ENCODE measurements at regions of chr10 and their contacts with region 1.

Region 1: DNA sequence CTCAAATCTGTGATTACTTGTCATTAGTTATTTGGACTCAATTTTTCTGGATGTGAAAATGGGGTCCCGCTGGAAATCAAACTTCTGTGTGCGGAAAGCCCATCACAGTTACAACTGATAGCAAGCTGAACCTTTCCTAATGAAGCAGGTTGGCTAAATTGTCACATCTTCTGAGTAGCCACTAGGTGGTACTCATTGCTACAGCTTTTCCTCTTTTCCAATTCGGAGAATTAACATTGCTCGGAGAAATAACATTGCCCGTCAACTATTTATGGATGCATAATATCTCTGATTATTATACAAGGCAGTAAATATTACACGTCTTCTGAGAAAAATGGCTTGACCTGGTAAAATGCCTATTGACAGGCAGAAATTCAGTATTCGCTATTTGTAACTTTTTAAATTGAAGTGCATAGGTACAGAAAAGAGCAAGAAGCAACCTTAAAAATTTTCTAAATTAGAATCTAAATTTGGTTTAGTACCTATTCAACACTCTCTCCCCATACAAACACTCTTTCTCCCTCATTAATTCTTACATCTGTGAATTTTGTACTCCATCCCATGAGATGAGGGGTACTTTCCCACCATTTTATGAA is 17.3 kb upstream of the BLOC1S2 start:
- DNase-seq: peak in 1 of 2 experiments; percentile 37
- H3K4me3 ChIP-seq: no peak overlapping the region
- H3K27ac ChIP-seq: no peak overlapping the region
- H3K4me1 ChIP-seq: no peaks in the 10 kb centered on the region; the same call in 1 of the 2 replicates
- H3K27me3 ChIP-seq: no peaks in the 10 kb centered on the region
- CTCF ChIP-seq: peak; percentile 64

Region 2: GRCh38 chr10:100267237-100268104 is 36.4 kb before region 1 on chr10 and contains the start of gene CWF19L1:
- CTCF ChIA-PET with region 1: no interaction called
- POLR2A ChIA-PET with region 1: no interaction called
- intact Hi-C with region 1: no loop called
- DNase-seq: peak; percentile 71 to 73
- H3K4me3 ChIP-seq: peak within 1 kb of the TSS; percentile 69
- H3K27ac ChIP-seq: peak within 1 kb of the TSS; percentile 71
- H3K4me1 ChIP-seq: no peaks in the 10 kb centered on the region
- H3K27me3 ChIP-seq: no peaks in the 10 kb centered on the region
- CTCF ChIP-seq: no peak
- total RNA-seq, gene CWF19L1: 17.9 and 20.4 TPM in 2 replicates

Region 3: DNA sequence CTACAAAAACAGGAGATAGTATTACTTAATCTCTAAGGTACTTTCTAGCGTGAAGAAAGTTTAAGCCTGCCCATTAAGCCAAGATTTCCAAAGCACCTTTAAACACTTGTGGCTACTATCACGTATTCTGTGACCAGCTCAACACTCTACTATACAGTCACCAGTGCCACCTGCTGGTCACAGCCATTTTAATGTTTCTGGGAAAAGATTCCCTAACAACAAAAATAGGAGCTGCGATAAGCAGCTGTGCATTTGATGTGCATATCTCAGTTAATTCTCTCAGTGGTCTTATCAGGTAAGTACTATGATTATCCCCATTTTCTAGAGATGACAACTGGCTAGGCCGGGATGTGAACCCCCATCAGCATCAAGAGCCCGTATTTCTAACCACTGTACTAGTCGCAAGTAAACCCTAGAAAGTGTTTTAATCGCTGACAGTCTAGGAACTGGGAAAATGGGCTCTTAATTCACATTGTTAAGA is 215.0 kb after region 1 on chr10:
- CTCF ChIA-PET with region 1: no interaction called
- POLR2A ChIA-PET with region 1: no interaction called
- intact Hi-C with region 1: loop called (anchors 10 kb)
- DNase-seq: peak; percentile 42 to 44
- H3K4me3 ChIP-seq: no peak overlapping the region
- H3K27ac ChIP-seq: no peak overlapping the region
- H3K4me1 ChIP-seq: no peaks in the 10 kb centered on the region
- H3K27me3 ChIP-seq: no peaks in the 10 kb centered on the region
- CTCF ChIP-seq: peak; percentile 75